Dendritic cell treated with granulocyte-macrophage colony-stimulating factor and Interleukin-4, amounts not matched to agents 40 ng/mL and 50 ng/mL, for 4 days (primary cell): ENCODE measurements at regions of chr5 and their contacts with region 1.

Region 1: DNA sequence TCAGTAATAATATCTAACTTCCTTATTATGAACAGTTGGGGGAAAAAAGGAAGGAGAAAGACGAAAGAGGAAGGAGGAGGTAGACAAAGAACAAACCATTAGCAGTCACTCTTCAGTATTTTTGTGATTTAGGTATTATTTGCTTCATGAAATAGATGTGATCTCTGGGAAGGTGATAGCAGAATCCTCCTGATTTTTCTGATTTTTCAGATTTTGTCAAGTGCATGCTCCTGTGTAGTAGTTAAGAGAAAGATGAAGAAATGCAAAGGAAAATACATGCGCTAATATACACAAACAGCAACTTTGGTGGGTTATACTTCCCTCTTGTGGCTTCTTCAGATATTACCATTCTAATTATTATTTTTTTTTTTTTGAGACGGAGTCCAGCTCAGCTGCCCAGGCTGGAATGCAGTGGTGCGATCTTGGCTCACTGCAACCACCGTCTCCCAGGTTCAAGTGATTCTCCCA is 31.6 kb downstream of the LMNB1 start:
- H3K4me3 Mint-ChIP-seq: peak overlapping the region; percentile 76
- H3K27ac Mint-ChIP-seq: peak overlapping the region; percentile 82
- H3K4me1 Mint-ChIP-seq: peaks cover 37% of the 10 kb centered on the region
- H3K27me3 Mint-ChIP-seq: no peaks in the 10 kb centered on the region

Region 2: GRCh38 chr5:126707080-126707479 is 101.5 kb before region 1 on chr5:
- intact Hi-C with region 1: no loop called
- H3K4me3 Mint-ChIP-seq: no peak overlapping the region
- H3K27ac Mint-ChIP-seq: no peak overlapping the region
- H3K4me1 Mint-ChIP-seq: no peaks in the 10 kb centered on the region
- H3K27me3 Mint-ChIP-seq: no peaks in the 10 kb centered on the region

Region 3: GRCh38 chr5:126754609-126755008 is 53.9 kb before region 1 on chr5:
- intact Hi-C with region 1: no loop called
- H3K4me3 Mint-ChIP-seq: no peak overlapping the region
- H3K27ac Mint-ChIP-seq: no peak overlapping the region
- H3K4me1 Mint-ChIP-seq: peaks cover 44% of the 10 kb centered on the region
- H3K27me3 Mint-ChIP-seq: no peaks in the 10 kb centered on the region

Region 4: DNA sequence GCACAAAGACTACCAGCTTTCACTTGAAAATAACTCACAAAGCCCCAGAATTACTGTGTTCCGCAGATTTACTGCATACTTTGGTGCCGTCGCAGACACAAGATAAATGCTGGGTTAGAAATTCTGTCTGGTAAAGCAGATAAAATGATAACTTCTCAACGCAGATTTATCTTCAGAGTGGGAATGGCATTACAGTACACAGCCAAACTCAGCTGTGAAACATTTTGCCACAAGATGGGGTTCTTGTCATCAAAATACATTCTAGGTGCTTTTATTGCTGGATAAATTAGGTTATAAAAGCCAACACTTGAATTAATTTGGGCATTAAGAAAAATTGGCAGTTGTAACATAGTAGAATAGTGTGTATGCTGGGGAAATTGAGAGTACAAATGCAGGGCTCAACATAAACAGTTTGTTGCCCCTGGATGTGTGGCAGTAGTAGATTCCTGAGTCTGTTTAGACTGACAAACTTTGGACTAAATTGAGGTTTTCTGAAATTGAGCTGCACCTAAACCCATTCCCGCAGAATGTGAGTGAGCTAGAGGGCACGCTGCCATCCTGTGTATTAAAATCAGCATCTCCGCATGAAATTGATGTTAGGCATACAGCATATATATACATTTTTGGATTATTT is 29.5 kb after region 1 on chr5:
- intact Hi-C with region 1: no loop called
- H3K4me3 Mint-ChIP-seq: no peak overlapping the region
- H3K27ac Mint-ChIP-seq: no peak overlapping the region
- H3K4me1 Mint-ChIP-seq: peaks cover 6% of the 10 kb centered on the region
- H3K27me3 Mint-ChIP-seq: no peaks in the 10 kb centered on the region

Region 5: DNA sequence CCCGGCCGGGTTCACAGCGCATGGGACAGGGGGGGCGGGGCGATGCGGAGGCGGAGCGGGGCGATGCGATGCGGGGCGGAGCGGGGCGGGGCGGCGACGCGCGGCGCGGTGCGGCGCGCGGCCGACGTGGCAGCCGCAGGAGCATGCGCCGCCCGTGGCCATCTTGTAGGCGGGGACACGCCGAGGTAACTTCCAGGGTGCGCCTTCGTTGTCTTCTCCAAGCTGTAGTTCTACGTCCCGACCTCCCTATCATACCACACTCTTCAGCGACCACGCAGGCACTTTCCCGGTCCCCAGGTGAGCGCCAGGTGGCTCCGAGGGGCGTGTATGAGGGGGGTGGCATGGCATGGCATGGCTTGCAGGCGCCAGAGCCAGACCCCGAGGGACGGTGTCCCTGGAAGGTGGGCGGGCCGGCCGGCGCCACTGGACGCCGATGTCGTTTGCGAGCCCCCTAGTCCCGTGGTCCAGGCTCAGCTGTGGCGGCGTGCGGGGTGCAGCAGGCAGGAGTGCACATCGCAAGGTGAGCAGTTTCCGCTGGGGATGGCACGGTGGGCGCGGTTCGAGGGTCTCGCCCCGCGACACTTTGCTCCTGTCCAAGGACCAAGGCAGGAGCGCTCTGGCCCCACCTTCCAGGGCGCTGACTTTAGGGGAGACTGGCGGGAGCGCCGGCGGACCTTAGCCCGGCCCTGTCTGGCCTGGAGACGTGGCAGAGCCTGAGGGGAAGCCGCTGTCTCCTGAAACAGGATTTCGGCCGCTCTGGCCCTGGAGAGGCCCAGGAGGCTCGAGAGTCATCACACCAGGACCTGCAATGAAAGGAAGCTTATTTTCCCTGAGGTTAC is 709.1 kb after region 1 on chr5 and contains the start of gene PRRC1:
- intact Hi-C with region 1: loop called (anchors 10 kb)
- H3K4me3 Mint-ChIP-seq: peak within 1 kb of the TSS; percentile 92
- H3K27ac Mint-ChIP-seq: peak within 1 kb of the TSS; percentile 91
- H3K4me1 Mint-ChIP-seq: peaks cover 35% of the 10 kb centered on the region
- H3K27me3 Mint-ChIP-seq: peaks cover under 1% of the 10 kb centered on the region